HEK293 (cell line): ENCODE measurements at regions of chr11 and their contacts with region 1.

Region 1: DNA sequence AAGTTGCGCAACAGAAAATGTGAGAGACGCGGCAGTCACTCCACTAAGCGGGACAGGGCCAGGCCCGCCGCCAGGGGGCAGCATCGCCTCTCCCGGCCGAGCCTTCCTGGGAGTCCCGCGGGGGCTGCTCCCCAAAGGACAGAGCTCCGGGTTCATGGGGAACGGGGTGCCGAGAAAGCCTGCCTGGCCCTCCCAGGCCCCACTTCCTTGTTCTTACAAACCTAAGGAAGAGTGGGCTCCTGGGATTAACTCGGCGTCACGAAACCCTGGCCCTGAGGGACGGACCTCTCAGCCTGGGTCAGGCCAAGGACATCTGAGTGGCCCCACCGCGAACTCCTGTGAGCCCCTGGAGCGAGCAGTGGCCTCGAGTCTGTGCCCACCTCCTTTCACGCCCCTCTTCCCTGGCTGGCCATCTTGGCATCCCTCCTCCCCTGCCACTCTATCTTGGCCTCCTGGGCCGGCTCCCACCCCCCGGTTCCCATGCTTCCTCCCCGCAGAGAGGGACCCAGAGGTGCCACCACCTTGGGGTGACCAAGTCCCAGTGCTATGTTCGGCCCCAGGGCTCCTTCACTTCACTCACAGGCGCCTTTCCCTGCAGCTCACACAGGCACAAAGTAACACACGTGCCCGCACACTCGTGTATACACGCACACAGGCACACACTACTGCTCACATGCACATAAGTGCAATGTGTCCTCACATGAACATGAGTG is 99.9 kb upstream of the FGF3 start:
- H3K4me3 ChIP-seq: no peak overlapping the region
- H3K27ac ChIP-seq: no peak overlapping the region
- H3K4me1 ChIP-seq: no peaks in the 10 kb centered on the region
- CTCF ChIP-seq: peak; percentile 57; the same call in 1 of the 2 replicates

Region 2: DNA sequence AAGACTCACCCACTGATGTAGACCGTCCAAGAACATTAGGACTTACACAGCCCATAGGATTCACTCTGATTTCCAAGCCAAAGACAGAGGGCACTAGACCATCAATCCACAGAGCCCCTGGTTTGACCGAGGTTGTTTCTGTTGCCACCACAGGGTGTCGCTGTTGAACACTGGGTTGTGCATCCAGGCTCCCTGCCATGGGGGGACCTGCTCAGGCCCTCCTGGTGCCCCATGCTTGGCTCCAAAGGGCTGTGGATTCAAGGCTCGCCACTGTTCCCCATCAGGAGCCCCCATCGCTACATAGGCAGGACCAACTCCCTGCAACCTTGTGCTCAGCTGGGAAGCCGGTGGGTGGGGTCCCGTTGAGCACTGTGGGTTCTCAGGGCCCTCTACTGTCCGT is 31.0 kb after region 1 on chr11:
- CTCF ChIA-PET with region 1: interaction called, 13 read pairs
- POLR2A ChIA-PET with region 1: no interaction called
- H3K4me3 ChIP-seq: no peak overlapping the region
- H3K27ac ChIP-seq: no peak overlapping the region
- H3K4me1 ChIP-seq: no peaks in the 10 kb centered on the region
- CTCF ChIP-seq: peak; percentile 45; the same call in 1 of the 2 replicates

Region 3: GRCh38 chr11:70169632-70170031 is 250.5 kb after region 1 on chr11:
- CTCF ChIA-PET with region 1: interaction called, 12 read pairs
- POLR2A ChIA-PET with region 1: no interaction called
- H3K4me3 ChIP-seq: no peak overlapping the region
- H3K27ac ChIP-seq: no peak overlapping the region
- H3K4me1 ChIP-seq: no peaks in the 10 kb centered on the region
- CTCF ChIP-seq: no peak

Region 4: GRCh38 chr11:70191495-70192140 is 272.5 kb after region 1 on chr11:
- CTCF ChIA-PET with region 1: interaction called, 17 read pairs
- POLR2A ChIA-PET with region 1: no interaction called
- H3K4me3 ChIP-seq: no peak overlapping the region
- H3K27ac ChIP-seq: no peak overlapping the region
- H3K4me1 ChIP-seq: no peaks in the 10 kb centered on the region
- CTCF ChIP-seq: peak; percentile 79

Region 5: DNA sequence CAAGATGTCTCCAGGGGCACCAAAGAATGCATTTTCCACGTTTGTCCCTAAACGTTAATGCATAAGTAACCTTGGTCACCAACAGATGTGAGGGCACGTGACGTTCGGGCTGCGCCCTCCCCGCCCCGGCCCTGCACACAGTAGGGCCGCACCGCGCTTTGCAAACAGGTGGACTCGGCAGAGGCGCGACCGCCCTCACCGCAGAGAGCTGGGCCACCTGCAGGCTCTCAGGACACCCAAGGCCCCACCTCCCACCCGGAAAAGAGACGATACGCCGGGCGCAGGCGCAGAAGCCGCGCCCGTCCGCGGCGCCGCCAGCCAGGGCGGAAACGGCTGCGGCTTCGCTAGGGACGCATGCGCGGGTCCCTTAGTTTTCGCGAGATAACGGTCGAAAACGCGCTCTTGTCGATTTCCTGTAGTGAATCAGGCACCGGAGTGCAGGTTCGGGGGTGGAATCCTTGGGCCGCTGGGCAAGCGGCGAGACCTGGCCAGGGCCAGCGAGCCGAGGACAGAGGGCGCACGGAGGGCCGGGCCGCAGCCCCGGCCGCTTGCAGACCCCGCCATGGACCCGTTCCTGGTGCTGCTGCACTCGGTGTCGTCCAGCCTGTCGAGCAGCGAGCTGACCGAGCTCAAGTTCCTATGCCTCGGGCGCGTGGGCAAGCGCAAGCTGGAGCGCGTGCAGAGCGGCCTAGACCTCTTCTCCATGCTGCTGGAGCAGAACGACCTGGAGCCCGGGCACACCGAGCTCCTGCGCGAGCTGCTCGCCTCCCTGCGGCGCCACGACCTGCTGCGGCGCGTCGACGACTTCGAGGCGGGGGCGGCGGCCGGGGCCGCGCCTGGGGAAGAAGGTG is 284.0 kb after region 1 on chr11 and contains the start of gene FADD:
- CTCF ChIA-PET with region 1: interaction called, 13 read pairs
- POLR2A ChIA-PET with region 1: no interaction called
- H3K4me3 ChIP-seq: peak within 1 kb of the TSS; percentile 69
- H3K27ac ChIP-seq: peak within 1 kb of the TSS; percentile 72; the same call in 1 of the 2 replicates
- H3K4me1 ChIP-seq: 0 out of 2 replicates have a peak, but pooled peaks cover 2% of the 10 kb centered on the region
- CTCF ChIP-seq: no peak

Region 6: GRCh38 chr11:70448983-70449567 is 530.0 kb after region 1 on chr11:
- CTCF ChIA-PET with region 1: no interaction called
- POLR2A ChIA-PET with region 1: no interaction called
- H3K4me3 ChIP-seq: no peak overlapping the region
- H3K27ac ChIP-seq: no peak overlapping the region
- H3K4me1 ChIP-seq: no peaks in the 10 kb centered on the region
- CTCF ChIP-seq: 0 out of 2 replicates have a peak, but pooled peaks have one; percentile 16